ENCODE measurements at regions of chr7 and their contacts with region 1.

Region 1: DNA sequence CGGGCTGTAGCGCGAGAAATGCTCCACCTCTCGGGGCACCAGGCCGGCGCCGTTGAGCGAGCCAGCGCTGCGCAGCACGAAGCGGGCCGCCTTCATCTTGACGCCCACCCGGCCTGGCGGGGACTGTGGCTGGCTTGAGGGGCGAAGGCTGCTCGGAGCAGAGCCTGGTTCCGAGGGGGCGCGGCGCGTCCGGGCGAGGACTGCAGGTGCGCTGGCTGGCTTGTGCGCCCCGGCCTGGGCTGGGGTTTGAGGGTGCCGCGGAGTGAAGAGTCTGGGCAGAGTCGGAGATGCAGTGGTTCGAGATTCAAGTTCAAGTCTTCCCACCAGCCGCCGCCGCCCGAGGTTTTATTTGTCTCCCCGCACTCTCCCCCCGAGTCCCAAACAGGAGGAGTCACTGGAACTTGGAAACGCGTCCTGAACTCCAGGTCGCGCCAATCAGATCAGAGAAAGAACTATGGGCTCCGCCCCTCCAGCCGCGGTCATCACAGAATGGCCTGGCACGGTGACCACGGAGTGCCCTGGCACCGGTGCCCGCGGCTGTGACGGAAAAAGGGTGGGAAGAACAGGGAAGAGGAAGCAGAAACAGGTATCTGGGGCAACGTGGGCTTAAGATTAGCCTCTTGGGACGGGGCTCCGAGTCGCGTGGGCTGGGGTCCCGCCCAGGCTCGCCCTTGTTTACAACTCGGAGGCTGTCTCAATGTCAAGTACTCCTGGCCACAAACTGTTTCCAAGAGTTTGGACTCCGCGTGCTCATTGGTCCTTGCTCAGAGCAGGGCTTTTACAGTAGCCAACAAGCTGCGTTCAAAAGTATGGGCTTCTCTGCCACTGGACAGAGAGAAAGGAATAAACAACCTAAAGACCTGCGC is at the start of gene PDK4:
- DNase-seq: peak; percentile 94 to 97
- ATAC-seq: peak; percentile 97
- H3K4me3 ChIP-seq: peak within 1 kb of the TSS; percentile 79 to 94
- H3K27ac ChIP-seq: peak within 1 kb of the TSS; percentile 36 to 88
- H3K4me1 ChIP-seq: peaks cover 0 to 2% of the 10 kb centered on the region in 2 donors
- H3K27me3 ChIP-seq: no peaks in the 10 kb centered on the region
- total RNA-seq, gene PDK4: 34.1 to 294 TPM

Region 2: GRCh38 chr7:95545078-95545498 is 51.3 kb before region 1 on chr7:
- intact Hi-C with region 1: loop called (anchors 1 to 5 kb)
- DNase-seq: peak in 1 of 2 donors; percentile 45
- ATAC-seq: peak; percentile 90
- H3K4me3 ChIP-seq: peak overlapping the region; percentile 40 to 64
- H3K27ac ChIP-seq: no peak overlapping the region
- H3K4me1 ChIP-seq: peaks cover 4% of the 10 kb centered on the region in 2 donors
- H3K27me3 ChIP-seq: no peaks in the 10 kb centered on the region

Measured in aorta (tissue), 5 donors.